Caco-2 (cell line): ENCODE measurements at regions of chr14 and their contacts with region 1.

Region 1: DNA sequence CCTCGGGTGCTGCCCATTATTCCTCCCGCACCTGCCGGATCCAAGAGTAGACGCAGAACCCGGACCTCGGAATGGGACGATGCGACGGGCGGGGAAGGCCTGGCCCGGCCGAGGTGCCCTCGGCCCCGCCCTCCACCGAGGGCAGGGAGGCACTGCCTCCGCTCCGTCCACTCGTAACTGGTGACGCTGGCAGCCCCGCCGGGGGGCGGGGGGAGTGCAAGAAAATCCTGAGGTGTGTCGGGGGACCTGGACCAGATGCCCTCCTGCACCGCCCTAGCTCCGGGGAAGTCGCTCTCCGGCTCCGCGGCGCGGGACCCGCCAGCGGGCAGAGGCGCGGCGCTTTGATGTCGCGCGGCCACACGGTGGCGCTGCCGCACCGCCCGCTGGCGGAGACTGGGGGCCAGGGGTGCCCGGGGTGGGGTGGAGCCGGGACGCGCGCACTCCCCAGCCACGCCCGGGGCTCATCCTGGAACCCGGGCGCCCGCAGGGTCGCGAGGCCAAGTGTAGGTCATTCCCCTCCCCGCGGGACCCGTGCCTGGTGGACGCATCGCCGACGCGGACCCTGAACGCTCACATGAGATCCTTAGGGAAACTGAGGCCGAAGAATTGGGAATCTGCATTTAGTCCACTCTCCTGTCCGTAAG is 202.8 kb downstream of the TTC8 start:
- DNase-seq: peak in 1 of 2 experiments; percentile 72
- H3K4me3 ChIP-seq: peak overlapping the region; percentile 55
- H3K4me3 Mint-ChIP-seq: peak overlapping the region; percentile 41
- H3K27ac Mint-ChIP-seq: no peak overlapping the region
- H3K4me1 ChIP-seq: no peaks in the 10 kb centered on the region
- H3K4me1 Mint-ChIP-seq: no peaks in the 10 kb centered on the region
- H3K27me3 ChIP-seq: no peaks in the 10 kb centered on the region; the same call in 1 of the 2 replicates
- H3K27me3 Mint-ChIP-seq: peaks cover 9% of the 10 kb centered on the region
- CTCF ChIP-seq: peak; percentile 44 to 94

Region 2: GRCh38 chr14:88961214-88961613 is 66.0 kb before region 1 on chr14:
- CTCF ChIA-PET with region 1: no interaction called
- POLR2A ChIA-PET with region 1: no interaction called
- intact Hi-C with region 1: no loop called
- DNase-seq: no peak
- H3K4me3 ChIP-seq: no peak overlapping the region
- H3K4me3 Mint-ChIP-seq: no peak overlapping the region
- H3K27ac Mint-ChIP-seq: no peak overlapping the region
- H3K4me1 ChIP-seq: no peaks in the 10 kb centered on the region
- H3K4me1 Mint-ChIP-seq: no peaks in the 10 kb centered on the region
- H3K27me3 ChIP-seq: no peaks in the 10 kb centered on the region; the same call in 1 of the 2 replicates
- H3K27me3 Mint-ChIP-seq: peaks cover 12% of the 10 kb centered on the region
- CTCF ChIP-seq: no peak

Region 3: GRCh38 chr14:89004166-89004565 is 23.1 kb before region 1 on chr14:
- CTCF ChIA-PET with region 1: no interaction called
- POLR2A ChIA-PET with region 1: no interaction called
- intact Hi-C with region 1: no loop called
- DNase-seq: no peak
- H3K4me3 ChIP-seq: no peak overlapping the region
- H3K4me3 Mint-ChIP-seq: no peak overlapping the region
- H3K27ac Mint-ChIP-seq: no peak overlapping the region
- H3K4me1 ChIP-seq: peaks cover 9% of the 10 kb centered on the region; the same call in 1 of the 2 replicates
- H3K4me1 Mint-ChIP-seq: no peaks in the 10 kb centered on the region
- H3K27me3 ChIP-seq: no peaks in the 10 kb centered on the region
- H3K27me3 Mint-ChIP-seq: no peaks in the 10 kb centered on the region
- CTCF ChIP-seq: no peak

Region 4: GRCh38 chr14:89237921-89238529 is 210.8 kb after region 1 on chr14:
- CTCF ChIA-PET with region 1: interaction called, 3 read pairs
- POLR2A ChIA-PET with region 1: no interaction called
- intact Hi-C with region 1: loop called (anchors 5 kb)
- DNase-seq: no peak
- H3K4me3 ChIP-seq: no peak overlapping the region
- H3K4me3 Mint-ChIP-seq: no peak overlapping the region
- H3K27ac Mint-ChIP-seq: no peak overlapping the region
- H3K4me1 ChIP-seq: no peaks in the 10 kb centered on the region
- H3K4me1 Mint-ChIP-seq: no peaks in the 10 kb centered on the region
- H3K27me3 ChIP-seq: no peaks in the 10 kb centered on the region
- H3K27me3 Mint-ChIP-seq: no peaks in the 10 kb centered on the region
- CTCF ChIP-seq: peak in 1 of 2 experiments; percentile 34

Region 5: GRCh38 chr14:89767861-89768268 is 740.6 kb after region 1 on chr14:
- CTCF ChIA-PET with region 1: no interaction called
- POLR2A ChIA-PET with region 1: no interaction called
- intact Hi-C with region 1: loop called (anchors 5 kb)
- DNase-seq: peak in 1 of 2 experiments; percentile 62
- H3K4me3 ChIP-seq: no peak overlapping the region
- H3K4me3 Mint-ChIP-seq: no peak overlapping the region
- H3K27ac Mint-ChIP-seq: no peak overlapping the region
- H3K4me1 ChIP-seq: no peaks in the 10 kb centered on the region
- H3K4me1 Mint-ChIP-seq: no peaks in the 10 kb centered on the region
- H3K27me3 ChIP-seq: no peaks in the 10 kb centered on the region
- H3K27me3 Mint-ChIP-seq: peaks cover 3% of the 10 kb centered on the region
- CTCF ChIP-seq: peak; percentile 49 to 70